ENCODE measurements at regions of chr12 and their contacts with region 1.

Region 1: GRCh38 chr12:131290255-131290959 is 336.7 kb downstream of the ADGRD1 start:
- DNase-seq: no peak
- H3K4me3 Mint-ChIP-seq: no peak overlapping the region
- H3K27ac Mint-ChIP-seq: no peak overlapping the region
- H3K4me1 Mint-ChIP-seq: no peaks in the 10 kb centered on the region
- H3K27me3 Mint-ChIP-seq: no peaks in the 10 kb centered on the region

Region 2: GRCh38 chr12:130351326-130351725 is 939.1 kb before region 1 on chr12:
- intact Hi-C with region 1: no loop called
- DNase-seq: no peak
- H3K4me3 Mint-ChIP-seq: no peak overlapping the region
- H3K27ac Mint-ChIP-seq: no peak overlapping the region
- H3K4me1 Mint-ChIP-seq: no peaks in the 10 kb centered on the region
- H3K27me3 Mint-ChIP-seq: no peaks in the 10 kb centered on the region

Region 3: GRCh38 chr12:130992448-130992847 is 298.0 kb before region 1 on chr12:
- intact Hi-C with region 1: no loop called
- DNase-seq: no peak
- H3K4me3 Mint-ChIP-seq: no peak overlapping the region
- H3K27ac Mint-ChIP-seq: no peak overlapping the region
- H3K4me1 Mint-ChIP-seq: no peaks in the 10 kb centered on the region
- H3K27me3 Mint-ChIP-seq: peaks cover 2% of the 10 kb centered on the region

Region 4: GRCh38 chr12:131250028-131250950 is 40.1 kb before region 1 on chr12:
- intact Hi-C with region 1: no loop called
- DNase-seq: no peak
- H3K4me3 Mint-ChIP-seq: no peak overlapping the region
- H3K27ac Mint-ChIP-seq: no peak overlapping the region
- H3K4me1 Mint-ChIP-seq: no peaks in the 10 kb centered on the region
- H3K27me3 Mint-ChIP-seq: no peaks in the 10 kb centered on the region

Region 5: DNA sequence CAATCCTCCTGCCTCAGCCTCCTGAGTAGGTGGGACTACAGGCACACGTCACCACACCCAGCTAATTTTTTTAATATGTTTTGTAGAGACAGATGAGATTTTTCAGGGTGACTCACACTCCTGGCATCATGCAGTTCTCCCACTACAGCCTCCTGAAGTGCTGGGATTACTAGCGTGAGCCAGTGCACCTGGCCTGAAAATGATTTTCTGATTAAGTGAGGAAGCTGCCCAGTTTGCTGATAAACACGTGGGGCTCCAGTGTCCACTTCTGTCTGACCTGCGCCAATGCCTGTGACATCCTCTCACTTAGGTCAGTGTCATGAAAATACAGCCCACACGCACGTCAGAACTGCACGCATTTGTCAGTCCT is 383.5 kb after region 1 on chr12:
- intact Hi-C with region 1: loop called (anchors 5 kb)
- DNase-seq: no peak
- H3K4me3 Mint-ChIP-seq: no peak overlapping the region
- H3K27ac Mint-ChIP-seq: no peak overlapping the region
- H3K4me1 Mint-ChIP-seq: no peaks in the 10 kb centered on the region
- H3K27me3 Mint-ChIP-seq: peaks cover 13% of the 10 kb centered on the region

Measured in activated T-helper 2 cell treated with anti-CD3 and anti-CD28 coated beads, Interferon-gamma antibody, Interleukin-2, Interleukin-4, amounts not matched to agents 10 μg/mL and 5 μg/mL and 100 μg/mL, durations not matched to agents 14 hours and 24 hours and 36 hours (primary cell).